ENCODE measurements at regions of chr20 and their contacts with region 1.

Region 1: GRCh38 chr20:53021934-53022333 is 49.8 kb downstream of the TSHZ2 start:
- DNase-seq: peak; percentile 22
- ATAC-seq: peak; percentile 84
- H3K4me3 Mint-ChIP-seq: peak overlapping the region; percentile 41
- H3K27ac Mint-ChIP-seq: peak overlapping the region; percentile 97
- H3K4me1 Mint-ChIP-seq: peaks cover 78% of the 10 kb centered on the region
- H3K27me3 Mint-ChIP-seq: no peaks in the 10 kb centered on the region

Region 2: GRCh38 chr20:53001498-53002301 is 20.2 kb before region 1 on chr20:
- CTCF ChIA-PET with region 1: interaction called, 3 read pairs
- POLR2A ChIA-PET with region 1: no interaction called
- intact Hi-C with region 1: loop called (anchors 1 to 2 kb)
- DNase-seq: peak; percentile 49
- ATAC-seq: peak; percentile 72
- H3K4me3 Mint-ChIP-seq: peak overlapping the region; percentile 65
- H3K27ac Mint-ChIP-seq: peak overlapping the region; percentile 99
- H3K4me1 Mint-ChIP-seq: peaks cover 82% of the 10 kb centered on the region
- H3K27me3 Mint-ChIP-seq: no peaks in the 10 kb centered on the region

Region 3: DNA sequence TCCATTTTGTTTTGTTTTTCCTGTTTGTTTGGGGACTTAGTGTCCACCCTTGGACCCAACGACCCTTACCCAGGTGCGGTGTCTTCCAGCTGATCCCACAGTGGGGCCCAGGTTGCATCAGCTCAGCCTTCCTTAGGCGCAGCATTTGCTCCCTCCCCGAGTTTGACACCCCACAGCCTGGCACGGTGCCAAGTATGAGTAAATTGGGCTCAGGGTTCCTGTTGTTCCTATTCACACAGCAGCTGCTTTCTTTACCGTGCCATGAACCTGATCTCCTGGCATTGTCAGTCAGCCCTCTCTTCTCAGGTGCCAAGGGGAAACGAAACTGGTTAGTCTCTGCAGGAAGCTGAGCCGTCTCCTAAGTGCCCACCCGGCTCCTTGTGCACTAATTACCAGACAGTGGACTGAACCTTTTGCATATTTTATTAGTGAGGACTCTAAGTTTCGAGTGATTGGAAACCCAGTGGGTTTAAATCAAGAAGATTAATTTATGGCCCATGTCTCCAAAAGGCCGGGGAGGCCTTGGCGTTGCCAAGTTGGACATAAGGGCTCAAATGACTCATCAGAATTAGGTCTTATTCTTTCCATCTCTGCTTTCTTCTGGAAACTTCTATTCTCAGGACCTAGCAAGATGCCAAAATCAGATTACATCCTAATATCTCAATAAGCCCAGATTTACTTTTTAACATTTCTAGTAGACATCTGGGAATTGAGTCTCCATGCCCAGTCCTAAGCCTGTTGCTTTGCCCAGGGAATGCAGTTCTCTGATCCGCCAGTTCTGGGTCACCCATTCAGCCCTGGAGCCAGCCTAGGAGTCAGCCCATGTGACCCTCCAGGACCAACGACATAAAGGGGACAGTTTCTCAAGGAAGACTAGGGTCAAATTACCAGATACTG is 19.0 kb after region 1 on chr20:
- CTCF ChIA-PET with region 1: no interaction called
- POLR2A ChIA-PET with region 1: no interaction called
- intact Hi-C with region 1: no loop called
- DNase-seq: no peak
- ATAC-seq: no peak
- H3K4me3 Mint-ChIP-seq: no peak overlapping the region
- H3K27ac Mint-ChIP-seq: no peak overlapping the region
- H3K4me1 Mint-ChIP-seq: peaks cover 16% of the 10 kb centered on the region
- H3K27me3 Mint-ChIP-seq: no peaks in the 10 kb centered on the region

Region 4: GRCh38 chr20:53070706-53071392 is 48.9 kb after region 1 on chr20:
- CTCF ChIA-PET with region 1: no interaction called
- POLR2A ChIA-PET with region 1: interaction called, 5 read pairs
- intact Hi-C with region 1: loop called (anchors 1 kb)
- DNase-seq: peak; percentile 64
- ATAC-seq: peak; percentile 77
- H3K4me3 Mint-ChIP-seq: peak overlapping the region; percentile 24
- H3K27ac Mint-ChIP-seq: peak overlapping the region; percentile 93
- H3K4me1 Mint-ChIP-seq: peaks cover 54% of the 10 kb centered on the region
- H3K27me3 Mint-ChIP-seq: peaks cover 3% of the 10 kb centered on the region

Region 5: GRCh38 chr20:53077373-53078205 is 55.7 kb after region 1 on chr20:
- CTCF ChIA-PET with region 1: no interaction called
- POLR2A ChIA-PET with region 1: interaction called, 20 read pairs
- intact Hi-C with region 1: loop called in 1 of 2 experiments (anchors 1 kb)
- DNase-seq: peak; percentile 56
- ATAC-seq: peak; percentile 80
- H3K4me3 Mint-ChIP-seq: no peak overlapping the region
- H3K27ac Mint-ChIP-seq: no peak overlapping the region
- H3K4me1 Mint-ChIP-seq: peaks cover 44% of the 10 kb centered on the region
- H3K27me3 Mint-ChIP-seq: peaks cover 3% of the 10 kb centered on the region

Region 6: DNA sequence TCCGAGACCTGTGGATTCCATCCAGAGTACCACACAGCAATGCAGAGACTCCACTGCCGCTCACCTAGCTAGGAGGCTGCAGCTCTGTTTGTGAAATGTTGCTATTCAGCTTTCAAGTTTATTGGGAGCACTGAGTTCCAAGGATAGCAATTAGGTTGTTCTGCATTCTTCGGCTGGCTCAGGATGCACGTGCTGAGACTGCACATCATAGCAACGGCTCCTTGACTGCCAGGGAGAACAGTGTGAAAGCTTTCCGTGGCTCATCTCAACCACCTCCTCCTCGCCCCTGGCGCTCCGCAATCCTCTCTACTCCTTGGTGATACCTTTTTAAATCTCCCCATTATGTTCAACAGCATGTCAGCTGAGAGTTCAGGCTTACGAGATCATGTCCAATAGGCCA is 66.9 kb after region 1 on chr20:
- CTCF ChIA-PET with region 1: no interaction called
- POLR2A ChIA-PET with region 1: no interaction called
- intact Hi-C with region 1: no loop called
- DNase-seq: no peak
- ATAC-seq: no peak
- H3K4me3 Mint-ChIP-seq: no peak overlapping the region
- H3K27ac Mint-ChIP-seq: no peak overlapping the region
- H3K4me1 Mint-ChIP-seq: peaks cover 36% of the 10 kb centered on the region
- H3K27me3 Mint-ChIP-seq: no peaks in the 10 kb centered on the region